ENCODE measurements at regions of chr15 and their contacts with region 1.

Region 1: GRCh38 chr15:40075298-40076044 is 33.2 kb downstream of the BMF start:
- DNase-seq: no peak
- H3K4me3 ChIP-seq: no peak overlapping the region
- H3K27ac ChIP-seq: no peak overlapping the region
- H3K4me1 ChIP-seq: peaks cover 12% of the 10 kb centered on the region; the same call in 1 of the 2 replicates
- H3K27me3 ChIP-seq: no peaks in the 10 kb centered on the region
- CTCF ChIP-seq: no peak

Region 2: GRCh38 chr15:38733331-38733730 is 1342.1 kb before region 1 on chr15:
- CTCF ChIA-PET with region 1: no interaction called
- POLR2A ChIA-PET with region 1: interaction called, 11 read pairs
- intact Hi-C with region 1: no loop called
- DNase-seq: no peak
- H3K4me3 ChIP-seq: no peak overlapping the region
- H3K27ac ChIP-seq: no peak overlapping the region
- H3K4me1 ChIP-seq: no peaks in the 10 kb centered on the region
- H3K27me3 ChIP-seq: no peaks in the 10 kb centered on the region
- CTCF ChIP-seq: no peak

Measured in PC-9 (cell line).